ENCODE measurements at regions of chr5 and their contacts with region 1.

Region 1: GRCh38 chr5:151659001-151659754 is 27.5 kb downstream of the SPARC start:
- DNase-seq: peak; percentile 64 to 85 (median 81)
- H3K4me3 ChIP-seq: no peak overlapping the region
- H3K4me3 Mint-ChIP-seq: no peak overlapping the region
- H3K27ac ChIP-seq: no peak overlapping the region
- H3K27ac Mint-ChIP-seq: no peak overlapping the region
- H3K4me1 ChIP-seq: peaks cover 22% of the 10 kb centered on the region in 2 donors
- H3K4me1 Mint-ChIP-seq: peaks cover 27% of the 10 kb centered on the region
- H3K27me3 ChIP-seq: no peaks in the 10 kb centered on the region
- H3K27me3 Mint-ChIP-seq: peaks cover 1 to 4% (median 1%) of the 10 kb centered on the region in 3 donors
- CTCF ChIP-seq: peak; percentile 94

Region 2: GRCh38 chr5:151523335-151523734 is 135.8 kb before region 1 on chr5:
- intact Hi-C with region 1: loop called in 1 of 2 experiments (anchors 10 kb)
- DNase-seq: peak; percentile 23 to 52 (median 32)
- H3K4me3 ChIP-seq: no peak overlapping the region
- H3K4me3 Mint-ChIP-seq: no peak overlapping the region
- H3K27ac ChIP-seq: no peak overlapping the region
- H3K27ac Mint-ChIP-seq: no peak overlapping the region
- H3K4me1 ChIP-seq: peaks cover 9 to 11% of the 10 kb centered on the region in 2 donors
- H3K4me1 Mint-ChIP-seq: peaks cover 19% of the 10 kb centered on the region
- H3K27me3 ChIP-seq: no peaks in the 10 kb centered on the region
- H3K27me3 Mint-ChIP-seq: no peaks in the 10 kb centered on the region
- CTCF ChIP-seq: peak; percentile 75

Region 3: DNA sequence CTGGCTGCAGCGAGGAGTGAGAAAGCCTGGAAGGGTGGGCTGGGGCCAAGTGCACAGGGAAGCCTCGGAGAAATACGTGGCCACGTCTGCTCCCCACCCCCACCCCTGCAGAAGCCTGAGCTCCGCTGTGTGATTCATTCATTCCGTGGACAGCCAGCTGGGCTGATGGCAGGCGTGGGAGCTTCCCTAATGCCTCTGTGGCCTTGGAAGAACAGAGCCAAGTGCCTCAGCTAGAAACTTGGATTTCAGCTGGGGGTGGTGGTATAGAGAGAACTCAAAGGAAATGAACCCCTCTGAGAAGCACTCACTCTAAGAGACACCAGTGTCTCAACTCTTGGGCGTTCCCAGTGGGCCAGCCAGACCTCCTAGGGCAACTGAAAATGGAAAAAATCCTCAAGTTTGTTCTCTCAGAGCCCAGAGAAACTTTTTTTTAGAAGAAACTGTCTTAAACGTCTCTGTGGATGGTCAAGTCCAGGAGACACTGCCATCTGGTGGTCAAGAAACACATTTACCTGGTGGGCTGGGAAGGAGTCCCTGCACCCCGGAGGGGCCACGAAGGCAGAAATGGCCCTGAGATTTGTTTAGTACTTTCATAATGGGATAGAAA is 81.3 kb after region 1 on chr5:
- intact Hi-C with region 1: loop called (anchors 2 to 5 kb)
- DNase-seq: peak; percentile 46 to 68 (median 63)
- H3K4me3 ChIP-seq: no peak overlapping the region
- H3K4me3 Mint-ChIP-seq: no peak overlapping the region
- H3K27ac ChIP-seq: no peak overlapping the region
- H3K27ac Mint-ChIP-seq: peak overlapping the region in 3 of 7 donors; percentile 13 to 76 (median 30)
- H3K4me1 ChIP-seq: peaks cover 11 to 19% of the 10 kb centered on the region in 2 donors
- H3K4me1 Mint-ChIP-seq: peaks cover 19% of the 10 kb centered on the region
- H3K27me3 ChIP-seq: no peaks in the 10 kb centered on the region
- H3K27me3 Mint-ChIP-seq: peaks cover 0 to 3% (median 0%) of the 10 kb centered on the region in 3 donors
- CTCF ChIP-seq: peak; percentile 96

Region 4: DNA sequence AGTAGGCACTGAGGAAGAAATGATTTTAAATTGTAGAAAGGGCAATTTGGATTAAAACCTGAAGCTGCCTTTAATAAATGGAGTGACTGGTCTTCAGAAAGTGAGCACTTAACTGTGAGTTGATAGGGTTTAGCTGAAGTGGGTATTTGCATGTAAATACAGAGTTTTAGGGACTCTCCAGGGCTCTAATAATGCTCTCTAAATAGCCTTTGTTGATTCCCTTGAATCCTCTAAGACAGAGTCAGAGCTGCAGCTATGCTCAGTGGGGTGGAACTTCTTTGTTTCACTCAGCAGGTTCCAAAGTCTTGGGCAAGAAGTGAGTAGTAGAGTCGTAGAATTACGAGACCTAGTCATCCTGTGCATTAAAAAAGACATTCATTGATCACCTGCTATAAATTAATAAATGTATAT is 244.1 kb after region 1 on chr5:
- intact Hi-C with region 1: no loop called
- DNase-seq: no peak
- H3K4me3 ChIP-seq: no peak overlapping the region
- H3K4me3 Mint-ChIP-seq: no peak overlapping the region
- H3K27ac ChIP-seq: no peak overlapping the region
- H3K27ac Mint-ChIP-seq: no peak overlapping the region
- H3K4me1 ChIP-seq: no peaks in the 10 kb centered on the region
- H3K4me1 Mint-ChIP-seq: no peaks in the 10 kb centered on the region
- H3K27me3 ChIP-seq: no peaks in the 10 kb centered on the region
- H3K27me3 Mint-ChIP-seq: peaks cover 0 to 7% (median 6%) of the 10 kb centered on the region in 3 donors
- CTCF ChIP-seq: no peak

Measured in CD14-positive monocyte (primary cell).